Activated CD4-positive, alpha-beta T cell treated with anti-CD3 and anti-CD28 coated beads for 36 hours (primary cell): ENCODE measurements at regions of chrX and their contacts with region 1.

Region 1: GRCh38 chrX:149286940-149287349 is 218.2 kb downstream of the IDS start:
- DNase-seq: peak; percentile 63
- ATAC-seq: peak; percentile 24
- H3K4me3 Mint-ChIP-seq: no peak overlapping the region
- H3K27ac Mint-ChIP-seq: no peak overlapping the region
- H3K4me1 Mint-ChIP-seq: peaks cover 25% of the 10 kb centered on the region
- H3K27me3 Mint-ChIP-seq: no peaks in the 10 kb centered on the region

Region 2: GRCh38 chrX:148133105-148133725 is 1153.7 kb before region 1 on chrX:
- CTCF ChIA-PET with region 1: interaction called, 3 read pairs
- POLR2A ChIA-PET with region 1: no interaction called
- intact Hi-C with region 1: loop called in 1 of 2 experiments (anchors 1 kb)
- DNase-seq: no peak
- ATAC-seq: no peak
- H3K4me3 Mint-ChIP-seq: no peak overlapping the region
- H3K27ac Mint-ChIP-seq: no peak overlapping the region
- H3K4me1 Mint-ChIP-seq: no peaks in the 10 kb centered on the region
- H3K27me3 Mint-ChIP-seq: no peaks in the 10 kb centered on the region

Region 3: GRCh38 chrX:148500423-148501385 is 786.2 kb before region 1 on chrX and contains the start of gene AFF2:
- CTCF ChIA-PET with region 1: no interaction called
- POLR2A ChIA-PET with region 1: no interaction called
- intact Hi-C with region 1: loop called in 1 of 2 experiments (anchors 10 kb)
- DNase-seq: peak; percentile 71
- ATAC-seq: peak; percentile 80
- H3K4me3 Mint-ChIP-seq: peak within 1 kb of the TSS; percentile 73
- H3K27ac Mint-ChIP-seq: no peak within 1 kb of the TSS
- H3K4me1 Mint-ChIP-seq: peaks cover 14% of the 10 kb centered on the region
- H3K27me3 Mint-ChIP-seq: peaks cover 2% of the 10 kb centered on the region
- total RNA-seq, gene AFF2: 1.3 to 2.2 TPM

Region 4: GRCh38 chrX:149003863-149004660 is 282.9 kb before region 1 on chrX:
- CTCF ChIA-PET with region 1: interaction called, 4 read pairs
- POLR2A ChIA-PET with region 1: no interaction called
- intact Hi-C with region 1: loop called in 1 of 2 experiments (anchors 10 kb)
- DNase-seq: no peak
- ATAC-seq: no peak
- H3K4me3 Mint-ChIP-seq: no peak overlapping the region
- H3K27ac Mint-ChIP-seq: no peak overlapping the region
- H3K4me1 Mint-ChIP-seq: no peaks in the 10 kb centered on the region
- H3K27me3 Mint-ChIP-seq: no peaks in the 10 kb centered on the region

Region 5: DNA sequence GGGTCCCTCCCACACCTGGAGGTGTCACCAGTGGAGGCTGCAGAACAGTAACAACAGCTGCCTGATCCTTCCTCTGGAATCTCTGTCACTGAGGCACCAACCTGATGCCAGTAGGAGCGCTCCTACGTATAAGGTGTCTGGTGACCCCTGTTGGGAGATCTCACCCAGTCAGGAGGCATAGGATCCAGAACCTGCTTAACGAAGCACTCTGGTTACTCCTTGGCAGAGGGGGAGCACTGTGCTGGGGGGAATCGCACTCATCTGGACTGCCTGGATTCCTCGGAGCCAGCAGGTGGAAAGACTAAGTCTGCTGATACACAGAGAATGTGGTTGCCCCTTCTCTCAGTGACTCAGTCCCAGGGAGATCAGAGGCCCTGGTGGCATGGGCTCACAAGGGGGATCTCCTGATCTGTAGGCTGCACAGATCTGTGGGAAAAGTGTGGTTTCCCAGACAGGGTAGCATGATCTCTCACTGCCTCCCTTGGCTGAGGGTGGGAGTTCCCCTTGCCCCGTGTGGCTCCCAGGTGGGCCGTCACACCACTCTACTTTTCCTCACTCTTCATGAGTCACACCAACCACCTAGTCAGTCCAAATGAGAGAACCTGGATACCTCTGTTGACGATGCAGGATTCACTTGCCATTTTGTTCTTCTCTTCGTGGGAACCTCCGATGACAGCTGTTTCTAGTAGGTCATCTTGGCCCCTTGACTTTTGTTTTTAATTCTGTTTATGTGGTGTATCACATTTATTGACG is 87.8 kb before region 1 on chrX:
- CTCF ChIA-PET with region 1: no interaction called
- POLR2A ChIA-PET with region 1: no interaction called
- intact Hi-C with region 1: loop called in 1 of 2 experiments (anchors 10 kb)
- DNase-seq: peak; percentile 59
- ATAC-seq: peak; percentile 93
- H3K4me3 Mint-ChIP-seq: no peak overlapping the region
- H3K27ac Mint-ChIP-seq: no peak overlapping the region
- H3K4me1 Mint-ChIP-seq: peaks cover 12% of the 10 kb centered on the region
- H3K27me3 Mint-ChIP-seq: peaks cover 7% of the 10 kb centered on the region

Region 6: GRCh38 chrX:149267878-149268813 is 18.8 kb before region 1 on chrX:
- CTCF ChIA-PET with region 1: interaction called, 3 read pairs
- POLR2A ChIA-PET with region 1: no interaction called
- intact Hi-C with region 1: loop called (anchors 1 to 2 kb)
- DNase-seq: peak; percentile 38
- ATAC-seq: peak; percentile 86
- H3K4me3 Mint-ChIP-seq: no peak overlapping the region
- H3K27ac Mint-ChIP-seq: peak overlapping the region; percentile 40
- H3K4me1 Mint-ChIP-seq: peaks cover 23% of the 10 kb centered on the region
- H3K27me3 Mint-ChIP-seq: peaks cover 15% of the 10 kb centered on the region